ENCODE measurements at regions of chr5 and their contacts with region 1.

Region 1: GRCh38 chr5:74934949-74935751 is 69.0 kb upstream of the FAM169A start:
- DNase-seq: peak in 15 of 35 experiments; percentile 1 to 46 (median 6)
- ATAC-seq: peak; percentile 83 to 90 (median 85)
- H3K4me3 ChIP-seq: peak overlapping the region in 1 of 2 donors; percentile 27
- H3K4me3 Mint-ChIP-seq: peak overlapping the region; percentile 54 to 69 (median 59)
- H3K27ac ChIP-seq: peak overlapping the region; percentile 48
- H3K27ac Mint-ChIP-seq: peak overlapping the region; percentile 83 to 87
- H3K4me1 ChIP-seq: peaks cover 14% of the 10 kb centered on the region in 2 experiments
- H3K4me1 Mint-ChIP-seq: peaks cover 33 to 46% (median 38%) of the 10 kb centered on the region in 3 donors
- H3K27me3 ChIP-seq: no peaks in the 10 kb centered on the region
- H3K27me3 Mint-ChIP-seq: peaks cover 0 to 5% of the 10 kb centered on the region in 2 donors

Region 2: DNA sequence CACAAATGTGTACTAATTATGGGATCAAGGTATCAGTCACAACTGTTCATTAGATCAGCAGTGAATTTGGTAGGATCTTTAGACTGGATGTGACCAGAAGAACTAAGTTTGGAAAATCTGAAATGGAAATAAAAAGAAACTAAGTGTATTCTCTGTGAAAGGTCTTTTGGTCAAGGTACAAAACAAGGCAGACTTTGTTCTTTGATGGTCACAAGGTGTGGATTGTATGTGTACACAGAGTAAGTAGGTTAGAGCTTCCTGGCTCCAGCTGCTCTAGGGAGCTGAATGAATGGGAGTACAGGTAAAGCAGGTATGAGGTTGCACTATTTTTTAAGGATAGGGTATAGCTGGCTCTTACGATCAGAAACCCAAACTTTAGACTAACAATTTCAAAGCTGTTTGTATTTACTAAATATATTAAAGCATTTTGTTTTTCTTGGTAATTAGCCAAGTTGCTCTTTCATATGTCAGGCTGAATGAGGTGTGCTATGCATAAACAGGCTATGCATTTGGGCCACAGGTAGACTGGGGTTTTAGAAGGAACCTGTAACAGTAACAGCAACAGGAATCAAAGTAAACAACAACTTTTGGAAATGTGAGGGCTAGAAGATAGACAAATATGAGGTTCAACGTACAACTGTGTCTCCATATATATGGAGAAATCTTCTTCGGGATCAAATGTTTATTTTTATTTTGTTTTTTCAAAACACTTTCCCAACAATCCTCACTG is 101.4 kb before region 1 on chr5:
- CTCF ChIA-PET with region 1: no interaction called
- POLR2A ChIA-PET with region 1: interaction called in 1 of 2 experiments, 10 read pairs
- DNase-seq: no peak
- ATAC-seq: no peak
- H3K4me3 ChIP-seq: no peak overlapping the region
- H3K4me3 Mint-ChIP-seq: no peak overlapping the region
- H3K27ac ChIP-seq: no peak overlapping the region
- H3K27ac Mint-ChIP-seq: no peak overlapping the region
- H3K4me1 ChIP-seq: peaks cover 0 to 5% of the 10 kb centered on the region in 2 experiments
- H3K4me1 Mint-ChIP-seq: peaks cover 6 to 16% (median 7%) of the 10 kb centered on the region in 3 donors
- H3K27me3 ChIP-seq: no peaks in the 10 kb centered on the region
- H3K27me3 Mint-ChIP-seq: no peaks in the 10 kb centered on the region

Region 3: DNA sequence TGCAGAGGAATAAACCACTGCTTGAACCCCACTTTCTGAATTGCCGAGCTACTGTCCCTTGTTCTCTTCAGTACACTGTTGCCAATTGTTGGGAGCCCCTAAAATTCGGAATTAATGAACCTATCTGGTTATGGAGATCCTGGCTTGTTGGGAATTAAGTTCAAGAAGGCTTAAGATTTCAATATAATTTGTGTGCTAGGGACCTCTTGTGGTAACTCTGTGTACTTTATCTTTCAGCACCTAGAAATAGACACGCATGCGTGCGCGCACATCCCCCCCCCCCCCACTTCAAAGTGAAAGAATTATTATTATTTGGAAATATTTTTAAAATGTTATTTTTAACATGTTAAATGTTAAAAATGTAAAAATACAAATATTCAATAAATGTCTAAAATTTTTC is 15.7 kb before region 1 on chr5:
- CTCF ChIA-PET with region 1: interaction called in 1 of 2 experiments, 17 read pairs
- POLR2A ChIA-PET with region 1: no interaction called
- DNase-seq: peak in 9 of 35 experiments; percentile 3 to 64 (median 11)
- ATAC-seq: peak in 3 of 4 experiments; percentile 40 to 66 (median 64)
- H3K4me3 ChIP-seq: no peak overlapping the region
- H3K4me3 Mint-ChIP-seq: no peak overlapping the region
- H3K27ac ChIP-seq: no peak overlapping the region
- H3K27ac Mint-ChIP-seq: no peak overlapping the region
- H3K4me1 ChIP-seq: no peaks in the 10 kb centered on the region
- H3K4me1 Mint-ChIP-seq: no peaks in the 10 kb centered on the region
- H3K27me3 ChIP-seq: no peaks in the 10 kb centered on the region
- H3K27me3 Mint-ChIP-seq: peaks cover 2 to 3% of the 10 kb centered on the region in 2 donors